ENCODE measurements at regions of chr1 and their contacts with region 1.

Region 1: GRCh38 chr1:156270314-156270713 is 12.3 kb downstream of the SMG5 start:
- DNase-seq: no peak
- H3K4me3 Mint-ChIP-seq: no peak overlapping the region
- H3K27ac Mint-ChIP-seq: no peak overlapping the region
- H3K4me1 Mint-ChIP-seq: no peaks in the 10 kb centered on the region
- H3K27me3 Mint-ChIP-seq: no peaks in the 10 kb centered on the region

Region 2: DNA sequence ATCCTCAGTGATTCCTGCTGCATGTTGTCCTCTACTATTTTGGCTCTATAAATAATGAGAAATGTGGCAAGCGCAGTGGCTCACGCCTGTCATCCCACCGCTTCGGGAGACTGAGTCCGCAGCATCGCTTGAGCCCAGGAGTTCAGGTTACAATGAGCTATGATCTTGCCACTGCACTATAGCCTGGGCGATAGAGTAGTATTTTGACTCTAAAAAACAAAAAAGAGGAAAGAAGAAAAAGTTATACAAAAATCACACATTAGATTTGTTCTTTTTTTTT is 77.2 kb before region 1 on chr1:
- CTCF ChIA-PET with region 1: no interaction called
- POLR2A ChIA-PET with region 1: no interaction called
- DNase-seq: no peak
- H3K4me3 Mint-ChIP-seq: peak overlapping the region; percentile 91
- H3K27ac Mint-ChIP-seq: peak overlapping the region; percentile 98
- H3K4me1 Mint-ChIP-seq: peaks cover 53% of the 10 kb centered on the region
- H3K27me3 Mint-ChIP-seq: no peaks in the 10 kb centered on the region

Region 3: DNA sequence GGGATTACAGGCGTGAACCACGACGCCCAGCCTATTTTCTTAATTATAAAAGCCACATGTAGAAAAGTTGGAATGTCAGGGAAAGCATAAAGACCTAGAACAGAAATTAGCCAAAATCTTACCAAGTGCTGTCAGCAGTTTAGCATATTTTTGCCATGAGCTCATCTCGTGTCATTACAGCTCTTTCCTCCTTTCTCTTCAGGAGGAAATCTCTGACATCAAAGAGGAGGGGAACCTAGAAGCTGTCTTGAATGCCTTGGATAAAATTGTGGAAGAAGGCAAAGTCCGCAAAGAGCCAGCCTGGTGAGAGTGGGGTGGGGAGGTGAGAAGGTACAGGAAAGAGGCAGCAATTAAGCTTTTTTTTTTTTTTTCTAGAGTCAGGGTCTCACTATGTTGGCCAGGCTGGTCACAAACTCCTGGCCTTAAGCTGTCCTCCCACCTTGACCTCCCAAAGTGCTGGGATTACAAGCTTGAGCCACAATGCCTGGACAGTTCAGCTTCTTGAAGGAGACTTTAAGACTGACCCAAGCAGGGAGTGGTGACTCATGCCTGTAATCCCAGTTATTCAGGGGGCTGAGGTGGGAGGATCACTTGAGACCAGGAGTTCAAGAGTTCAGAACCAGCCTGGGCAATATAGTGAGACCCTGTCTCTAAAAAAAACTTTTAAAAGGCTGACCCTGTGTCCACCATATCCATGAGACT is 36.7 kb before region 1 on chr1:
- CTCF ChIA-PET with region 1: interaction called, 15 read pairs
- POLR2A ChIA-PET with region 1: no interaction called
- DNase-seq: no peak
- H3K4me3 Mint-ChIP-seq: no peak overlapping the region
- H3K27ac Mint-ChIP-seq: no peak overlapping the region
- H3K4me1 Mint-ChIP-seq: peaks cover 3% of the 10 kb centered on the region
- H3K27me3 Mint-ChIP-seq: no peaks in the 10 kb centered on the region

Region 4: GRCh38 chr1:156282479-156283222 is 12.3 kb after region 1 on chr1 and contains the start of gene SMG5:
- CTCF ChIA-PET with region 1: interaction called, 21 read pairs
- POLR2A ChIA-PET with region 1: no interaction called
- DNase-seq: peak; percentile 98
- H3K4me3 Mint-ChIP-seq: peak within 1 kb of the TSS; percentile 97
- H3K27ac Mint-ChIP-seq: peak within 1 kb of the TSS; percentile 94
- H3K4me1 Mint-ChIP-seq: peaks cover 38% of the 10 kb centered on the region
- H3K27me3 Mint-ChIP-seq: no peaks in the 10 kb centered on the region
- total RNA-seq, gene SMG5: 68.0 to 68.1 TPM

Measured in activated CD4-positive, alpha-beta T cell treated with anti-CD3 and anti-CD28 coated beads, Interleukin-2, amount 10 ng/mL, durations not matched to agents 7 days and 5 days (primary cell).